ENCODE measurements at regions of chr1 and their contacts with region 1.

Region 1: DNA sequence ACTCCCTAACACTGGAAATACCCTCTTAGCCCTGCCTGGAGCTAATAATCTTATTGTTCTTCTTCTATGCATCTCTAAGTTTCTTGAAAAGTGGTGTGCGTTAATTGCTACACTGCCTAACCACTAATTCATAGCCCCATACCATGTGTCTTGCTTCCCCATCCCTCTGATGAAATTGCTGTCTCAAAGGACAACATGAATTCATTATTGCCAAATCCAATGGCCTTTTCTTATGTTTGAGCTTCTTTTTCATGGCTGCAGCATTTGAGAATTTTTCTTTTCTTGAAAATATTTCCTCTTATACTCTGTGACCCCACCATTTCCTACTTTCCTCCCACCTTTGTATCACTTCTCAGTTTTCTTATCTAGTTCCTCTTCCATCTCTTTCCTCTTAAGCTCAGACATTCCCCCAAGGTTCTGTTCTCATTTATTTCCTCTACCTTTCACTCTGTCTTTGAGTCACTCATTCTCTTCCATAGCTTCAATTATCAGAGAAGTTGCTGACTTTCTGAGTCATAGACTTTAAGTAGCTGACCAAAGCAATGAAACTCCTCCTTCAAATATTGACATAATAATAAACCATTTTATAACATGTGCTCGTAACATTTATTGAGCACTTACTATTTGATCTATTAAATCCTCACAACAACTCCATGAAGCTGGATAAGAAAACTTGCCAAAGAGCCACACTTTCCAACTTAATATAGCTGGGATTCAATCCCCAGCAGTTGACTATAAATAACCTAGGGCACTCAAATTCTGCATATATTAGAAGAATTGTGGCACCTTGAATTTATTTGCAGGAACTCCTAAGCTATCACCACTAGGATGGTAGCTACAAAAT is 35.5 kb upstream of the ATP6V1G3 start:
- DNase-seq: no peak
- ATAC-seq: no peak
- H3K4me3 ChIP-seq: no peak overlapping the region
- H3K4me3 Mint-ChIP-seq: no peak overlapping the region
- H3K27ac ChIP-seq: no peak overlapping the region
- H3K27ac Mint-ChIP-seq: no peak overlapping the region
- H3K4me1 ChIP-seq: no peaks in the 10 kb centered on the region
- H3K4me1 Mint-ChIP-seq: peaks cover 25% of the 10 kb centered on the region
- H3K27me3 ChIP-seq: no peaks in the 10 kb centered on the region
- H3K27me3 Mint-ChIP-seq: no peaks in the 10 kb centered on the region
- CTCF ChIP-seq: no peak

Region 2: GRCh38 chr1:198096390-198096789 is 479.6 kb before region 1 on chr1:
- CTCF ChIA-PET with region 1: no interaction called
- POLR2A ChIA-PET with region 1: no interaction called
- intact Hi-C with region 1: loop called in 1 of 2 experiments (anchors 5 kb)
- DNase-seq: no peak
- ATAC-seq: no peak
- H3K4me3 ChIP-seq: no peak overlapping the region
- H3K4me3 Mint-ChIP-seq: no peak overlapping the region
- H3K27ac ChIP-seq: no peak overlapping the region
- H3K27ac Mint-ChIP-seq: no peak overlapping the region
- H3K4me1 ChIP-seq: peaks cover under 1% of the 10 kb centered on the region
- H3K4me1 Mint-ChIP-seq: peaks cover 7% of the 10 kb centered on the region
- H3K27me3 ChIP-seq: no peaks in the 10 kb centered on the region
- H3K27me3 Mint-ChIP-seq: no peaks in the 10 kb centered on the region
- CTCF ChIP-seq: no peak

Region 3: GRCh38 chr1:198387587-198387986 is 188.4 kb before region 1 on chr1:
- CTCF ChIA-PET with region 1: no interaction called
- POLR2A ChIA-PET with region 1: no interaction called
- intact Hi-C with region 1: no loop called
- DNase-seq: no peak
- ATAC-seq: no peak
- H3K4me3 ChIP-seq: no peak overlapping the region
- H3K4me3 Mint-ChIP-seq: no peak overlapping the region
- H3K27ac ChIP-seq: no peak overlapping the region
- H3K27ac Mint-ChIP-seq: no peak overlapping the region
- H3K4me1 ChIP-seq: no peaks in the 10 kb centered on the region
- H3K4me1 Mint-ChIP-seq: no peaks in the 10 kb centered on the region
- H3K27me3 ChIP-seq: peaks cover 0 to 4% of the 10 kb centered on the region in 2 experiments
- H3K27me3 Mint-ChIP-seq: no peaks in the 10 kb centered on the region
- CTCF ChIP-seq: no peak

Region 4: GRCh38 chr1:198564716-198565115 is 11.3 kb before region 1 on chr1:
- CTCF ChIA-PET with region 1: no interaction called
- POLR2A ChIA-PET with region 1: interaction called, 4 read pairs
- intact Hi-C with region 1: loop called in 1 of 2 experiments (anchors 1 kb)
- DNase-seq: peak in 6 of 9 experiments; percentile 3 to 75 (median 20)
- ATAC-seq: peak; percentile 89
- H3K4me3 ChIP-seq: peak overlapping the region in 1 of 2 experiments; percentile 12
- H3K4me3 Mint-ChIP-seq: no peak overlapping the region
- H3K27ac ChIP-seq: peak overlapping the region in 1 of 2 experiments; percentile 43
- H3K27ac Mint-ChIP-seq: peak overlapping the region; percentile 74
- H3K4me1 ChIP-seq: peaks cover 45% of the 10 kb centered on the region
- H3K4me1 Mint-ChIP-seq: peaks cover 53% of the 10 kb centered on the region
- H3K27me3 ChIP-seq: no peaks in the 10 kb centered on the region
- H3K27me3 Mint-ChIP-seq: no peaks in the 10 kb centered on the region
- CTCF ChIP-seq: no peak

Region 5: DNA sequence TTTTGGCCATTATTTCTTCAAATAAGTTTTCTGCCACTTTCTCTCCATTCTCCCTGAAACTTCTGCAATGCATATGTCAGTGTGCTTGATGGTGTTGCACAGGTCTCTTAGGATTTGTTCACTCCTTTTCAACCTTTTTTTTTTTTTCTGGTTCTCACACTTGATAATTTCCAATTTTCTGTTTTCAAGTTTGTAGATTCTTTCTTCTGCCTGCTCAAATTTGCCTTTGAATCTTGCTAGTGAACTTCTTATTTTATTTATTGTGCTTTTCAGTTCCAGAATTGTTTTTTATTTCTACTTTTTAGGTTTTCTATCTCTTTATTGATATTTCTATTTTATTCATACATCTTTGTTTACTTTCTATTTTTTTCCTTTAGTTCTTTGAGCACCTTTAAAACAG is 14.4 kb after region 1 on chr1:
- CTCF ChIA-PET with region 1: interaction called, 3 read pairs
- POLR2A ChIA-PET with region 1: no interaction called
- intact Hi-C with region 1: loop called in 1 of 2 experiments (anchors 2 kb)
- DNase-seq: no peak
- ATAC-seq: no peak
- H3K4me3 ChIP-seq: no peak overlapping the region
- H3K4me3 Mint-ChIP-seq: no peak overlapping the region
- H3K27ac ChIP-seq: no peak overlapping the region
- H3K27ac Mint-ChIP-seq: no peak overlapping the region
- H3K4me1 ChIP-seq: peaks cover 6% of the 10 kb centered on the region
- H3K4me1 Mint-ChIP-seq: peaks cover 10% of the 10 kb centered on the region
- H3K27me3 ChIP-seq: no peaks in the 10 kb centered on the region
- H3K27me3 Mint-ChIP-seq: no peaks in the 10 kb centered on the region
- CTCF ChIP-seq: no peak